MCF 10A (cell line): ENCODE measurements at regions of chr5 and their contacts with region 1.

Region 1: DNA sequence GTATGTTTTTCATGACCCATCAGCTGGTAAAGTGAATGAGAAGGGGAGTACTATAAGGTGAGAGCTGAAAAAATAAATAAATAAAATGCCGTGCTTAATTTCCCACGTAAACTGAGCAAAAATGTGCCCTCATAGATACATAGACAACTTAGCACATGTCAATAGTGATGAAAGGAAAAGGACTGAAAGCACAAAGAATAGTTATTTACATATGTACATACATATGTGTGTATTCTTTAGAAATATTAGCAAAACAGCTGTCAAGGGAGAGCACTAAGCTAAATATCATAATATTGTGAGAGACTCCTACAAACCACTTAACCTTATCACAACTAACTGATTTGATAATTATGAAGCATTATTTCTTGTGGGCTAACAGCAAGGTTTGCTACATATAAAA is 213.6 kb upstream of the FTMT start:
- DNase-seq: no peak
- H3K4me3 Mint-ChIP-seq: no peak overlapping the region
- H3K27ac Mint-ChIP-seq: no peak overlapping the region
- H3K4me1 Mint-ChIP-seq: peaks cover 5% of the 10 kb centered on the region
- H3K27me3 Mint-ChIP-seq: no peaks in the 10 kb centered on the region
- CTCF ChIP-seq: no peak

Region 2: DNA sequence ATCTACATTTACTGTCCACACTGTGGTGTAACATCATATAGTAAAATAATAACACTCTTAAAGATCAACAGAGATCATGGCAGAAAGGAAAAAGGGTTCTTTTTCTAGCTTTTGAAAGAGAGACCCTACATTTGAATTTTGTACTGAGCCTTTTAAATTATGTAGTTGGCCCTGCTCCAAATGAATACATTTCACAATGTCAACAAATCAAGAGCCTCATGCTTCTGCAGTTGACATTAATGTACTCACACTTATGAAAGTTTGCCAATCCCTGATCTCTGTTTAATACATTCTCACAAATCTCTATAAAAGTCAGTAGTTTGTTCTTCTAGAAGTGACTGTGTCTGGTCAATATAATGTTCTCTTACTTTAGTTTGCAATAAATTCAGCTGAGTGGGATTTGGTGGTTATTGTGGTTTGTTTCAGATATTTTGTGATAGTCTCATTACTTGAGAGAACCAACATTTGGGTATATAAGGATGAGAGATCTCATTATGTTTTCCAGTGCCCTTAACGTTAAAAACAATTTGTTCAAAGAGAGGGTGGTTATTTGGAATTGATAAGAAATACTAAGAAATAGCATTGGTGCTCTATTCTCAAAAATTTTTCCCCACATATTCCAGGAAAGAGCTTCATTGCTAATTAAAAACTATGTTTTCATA is 64.3 kb before region 1 on chr5:
- CTCF ChIA-PET with region 1: no interaction called
- POLR2A ChIA-PET with region 1: no interaction called
- intact Hi-C with region 1: no loop called
- DNase-seq: no peak
- H3K4me3 Mint-ChIP-seq: no peak overlapping the region
- H3K27ac Mint-ChIP-seq: no peak overlapping the region
- H3K4me1 Mint-ChIP-seq: no peaks in the 10 kb centered on the region
- H3K27me3 Mint-ChIP-seq: no peaks in the 10 kb centered on the region
- CTCF ChIP-seq: no peak

Region 3: DNA sequence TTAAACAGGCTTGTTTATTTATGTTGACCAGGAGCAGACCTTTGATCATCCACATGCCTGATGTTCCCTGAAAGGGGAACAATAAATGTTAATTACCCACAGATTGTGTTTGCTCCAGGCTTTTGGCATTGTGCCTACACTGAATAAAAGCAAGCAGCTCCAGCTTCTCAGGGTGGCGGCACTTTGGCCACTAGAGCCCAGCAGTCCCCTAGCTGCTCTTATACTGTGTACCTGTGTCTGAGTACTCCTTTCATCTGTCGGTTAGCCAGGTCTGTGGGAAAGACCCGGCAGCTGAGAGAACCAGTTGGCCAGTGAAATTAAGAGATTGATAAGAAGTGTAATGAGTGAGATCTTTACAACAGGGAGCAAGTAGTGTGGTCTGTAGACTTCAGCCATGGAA is 41.2 kb before region 1 on chr5:
- CTCF ChIA-PET with region 1: no interaction called
- POLR2A ChIA-PET with region 1: no interaction called
- intact Hi-C with region 1: loop called (anchors 1 kb)
- DNase-seq: no peak
- H3K4me3 Mint-ChIP-seq: no peak overlapping the region
- H3K27ac Mint-ChIP-seq: no peak overlapping the region
- H3K4me1 Mint-ChIP-seq: no peaks in the 10 kb centered on the region
- H3K27me3 Mint-ChIP-seq: no peaks in the 10 kb centered on the region
- CTCF ChIP-seq: no peak